B cell (primary cell): ENCODE measurements at regions of chr19 and their contacts with region 1.

Region 1: GRCh38 chr19:37906869-37907734 is at the start of gene SIPA1L3:
- DNase-seq: peak; percentile 96
- ATAC-seq: peak; percentile 93
- H3K4me3 ChIP-seq: peak within 1 kb of the TSS; percentile 68 to 99 (median 94)
- H3K4me3 Mint-ChIP-seq: peak within 1 kb of the TSS; percentile 91
- H3K27ac ChIP-seq: peak within 1 kb of the TSS; percentile 64 to 84
- H3K27ac Mint-ChIP-seq: peak within 1 kb of the TSS; percentile 96
- H3K4me1 ChIP-seq: peaks cover 55 to 63% of the 10 kb centered on the region in 2 donors
- H3K4me1 Mint-ChIP-seq: peaks cover 58% of the 10 kb centered on the region
- H3K27me3 ChIP-seq: no peaks in the 10 kb centered on the region
- H3K27me3 Mint-ChIP-seq: no peaks in the 10 kb centered on the region
- CTCF ChIP-seq: no peak
- total RNA-seq, gene SIPA1L3: 290 and 295 TPM in 2 replicates

Region 2: GRCh38 chr19:37920591-37921450 is 13.7 kb after region 1 on chr19:
- CTCF ChIA-PET with region 1: interaction called, 54 read pairs
- POLR2A ChIA-PET with region 1: interaction called, 46 read pairs
- intact Hi-C with region 1: no loop called
- DNase-seq: peak; percentile 45
- ATAC-seq: peak; percentile 12
- H3K4me3 ChIP-seq: peak overlapping the region in 4 of 5 experiments; percentile 1 to 56 (median 24)
- H3K4me3 Mint-ChIP-seq: peak overlapping the region; percentile 80
- H3K27ac ChIP-seq: peak overlapping the region; percentile 72 to 87
- H3K27ac Mint-ChIP-seq: peak overlapping the region; percentile 95
- H3K4me1 ChIP-seq: peaks cover 77 to 87% of the 10 kb centered on the region in 2 donors
- H3K4me1 Mint-ChIP-seq: peaks cover 69% of the 10 kb centered on the region
- H3K27me3 ChIP-seq: no peaks in the 10 kb centered on the region
- H3K27me3 Mint-ChIP-seq: no peaks in the 10 kb centered on the region
- CTCF ChIP-seq: no peak

Region 3: GRCh38 chr19:37987356-37988332 is 80.5 kb after region 1 on chr19:
- CTCF ChIA-PET with region 1: interaction called, 19 read pairs
- POLR2A ChIA-PET with region 1: interaction called, 10 read pairs
- intact Hi-C with region 1: no loop called
- DNase-seq: no peak
- ATAC-seq: no peak
- H3K4me3 ChIP-seq: no peak overlapping the region
- H3K4me3 Mint-ChIP-seq: no peak overlapping the region
- H3K27ac ChIP-seq: peak overlapping the region; percentile 88 to 93
- H3K27ac Mint-ChIP-seq: peak overlapping the region; percentile 99
- H3K4me1 ChIP-seq: peaks cover 75 to 91% of the 10 kb centered on the region in 2 donors
- H3K4me1 Mint-ChIP-seq: peaks cover 85% of the 10 kb centered on the region
- H3K27me3 ChIP-seq: no peaks in the 10 kb centered on the region
- H3K27me3 Mint-ChIP-seq: no peaks in the 10 kb centered on the region
- CTCF ChIP-seq: no peak

Region 4: GRCh38 chr19:38049105-38049649 is 142.1 kb after region 1 on chr19:
- CTCF ChIA-PET with region 1: interaction called, 186 read pairs
- POLR2A ChIA-PET with region 1: interaction called, 43 read pairs
- intact Hi-C with region 1: loop called (anchors 1 kb)
- DNase-seq: peak; percentile 85
- ATAC-seq: peak; percentile 35
- H3K4me3 ChIP-seq: peak overlapping the region in 4 of 5 experiments; percentile 2 to 39 (median 26)
- H3K4me3 Mint-ChIP-seq: peak overlapping the region; percentile 77
- H3K27ac ChIP-seq: peak overlapping the region; percentile 97
- H3K27ac Mint-ChIP-seq: peak overlapping the region; percentile 96
- H3K4me1 ChIP-seq: peaks cover 52 to 68% of the 10 kb centered on the region in 2 donors
- H3K4me1 Mint-ChIP-seq: peaks cover 75% of the 10 kb centered on the region
- H3K27me3 ChIP-seq: no peaks in the 10 kb centered on the region
- H3K27me3 Mint-ChIP-seq: no peaks in the 10 kb centered on the region
- CTCF ChIP-seq: no peak

Region 5: GRCh38 chr19:38134540-38135149 is 227.5 kb after region 1 on chr19:
- CTCF ChIA-PET with region 1: interaction called, 62 read pairs
- POLR2A ChIA-PET with region 1: no interaction called
- intact Hi-C with region 1: loop called (anchors 1 kb)
- DNase-seq: peak; percentile 64
- ATAC-seq: no peak
- H3K4me3 ChIP-seq: no peak overlapping the region
- H3K4me3 Mint-ChIP-seq: no peak overlapping the region
- H3K27ac ChIP-seq: no peak overlapping the region
- H3K27ac Mint-ChIP-seq: peak overlapping the region; percentile 41
- H3K4me1 ChIP-seq: no peaks in the 10 kb centered on the region
- H3K4me1 Mint-ChIP-seq: no peaks in the 10 kb centered on the region
- H3K27me3 ChIP-seq: no peaks in the 10 kb centered on the region
- H3K27me3 Mint-ChIP-seq: no peaks in the 10 kb centered on the region
- CTCF ChIP-seq: peak; percentile 75

Region 6: GRCh38 chr19:38245826-38246498 is 338.9 kb after region 1 on chr19:
- CTCF ChIA-PET with region 1: interaction called, 36 read pairs
- POLR2A ChIA-PET with region 1: no interaction called
- intact Hi-C with region 1: no loop called
- DNase-seq: no peak
- ATAC-seq: no peak
- H3K4me3 ChIP-seq: no peak overlapping the region
- H3K4me3 Mint-ChIP-seq: no peak overlapping the region
- H3K27ac ChIP-seq: no peak overlapping the region
- H3K27ac Mint-ChIP-seq: no peak overlapping the region
- H3K4me1 ChIP-seq: peaks cover 3 to 12% of the 10 kb centered on the region in 2 donors
- H3K4me1 Mint-ChIP-seq: peaks cover 15% of the 10 kb centered on the region
- H3K27me3 ChIP-seq: no peaks in the 10 kb centered on the region
- H3K27me3 Mint-ChIP-seq: no peaks in the 10 kb centered on the region
- CTCF ChIP-seq: no peak

Region 7: DNA sequence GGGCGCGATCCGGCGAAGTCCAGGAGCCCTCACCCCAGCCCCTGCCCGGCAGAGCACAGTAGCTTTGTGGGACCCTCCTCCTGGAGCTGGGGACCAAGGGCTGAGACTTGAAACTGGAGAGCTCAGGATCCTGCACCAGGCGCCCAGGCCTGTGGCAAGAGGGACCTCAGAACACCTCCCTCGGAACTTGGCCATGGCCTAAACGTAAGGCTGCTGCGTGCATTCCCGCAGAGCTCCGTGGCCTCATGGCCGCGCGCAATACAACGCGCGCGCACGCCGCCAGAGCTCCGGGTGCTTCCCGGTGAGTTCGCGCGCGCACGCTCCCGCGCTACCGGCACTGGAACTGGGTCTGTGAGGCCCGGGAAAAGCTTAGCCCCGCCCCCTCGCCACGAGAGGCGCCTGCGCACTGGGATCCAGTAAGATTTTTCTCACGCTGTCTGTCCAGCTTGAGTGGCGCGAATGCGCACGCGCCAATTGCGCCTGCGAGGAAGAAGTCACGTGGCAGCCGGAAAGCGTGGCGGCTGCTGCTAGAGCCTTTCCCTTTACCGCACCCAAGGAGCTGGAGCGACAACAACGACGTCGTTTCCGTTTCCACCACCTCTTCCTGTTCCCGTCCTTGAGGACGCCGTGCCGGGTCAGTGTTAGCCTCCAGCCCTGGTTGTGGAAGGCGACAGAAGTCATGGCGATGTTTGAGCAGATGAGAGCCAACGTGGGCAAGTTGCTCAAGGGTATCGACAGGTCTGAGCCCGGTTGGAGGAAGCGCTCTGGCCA is 711.7 kb after region 1 on chr19 and contains the start of gene EIF3K:
- CTCF ChIA-PET with region 1: no interaction called
- POLR2A ChIA-PET with region 1: no interaction called
- intact Hi-C with region 1: loop called (anchors 10 kb)
- DNase-seq: peak; percentile 99
- ATAC-seq: peak; percentile 40
- H3K4me3 ChIP-seq: peak within 1 kb of the TSS; percentile 54 to 95 (median 79)
- H3K4me3 Mint-ChIP-seq: peak within 1 kb of the TSS; percentile 100
- H3K27ac ChIP-seq: peak within 1 kb of the TSS; percentile 88 to 93
- H3K27ac Mint-ChIP-seq: peak within 1 kb of the TSS; percentile 98
- H3K4me1 ChIP-seq: peaks cover 33 to 50% of the 10 kb centered on the region in 2 donors
- H3K4me1 Mint-ChIP-seq: peaks cover 47% of the 10 kb centered on the region
- H3K27me3 ChIP-seq: no peaks in the 10 kb centered on the region
- H3K27me3 Mint-ChIP-seq: no peaks in the 10 kb centered on the region
- CTCF ChIP-seq: no peak
- total RNA-seq, gene EIF3K: 284 and 295 TPM in 2 replicates